Caco-2 (cell line): ENCODE measurements at regions of chr17 and their contacts with region 1.

Region 1: GRCh38 chr17:57440522-57441485 is 184.5 kb downstream of the MSI2 start:
- DNase-seq: no peak
- H3K4me3 ChIP-seq: no peak overlapping the region
- H3K4me3 Mint-ChIP-seq: no peak overlapping the region
- H3K27ac Mint-ChIP-seq: peak overlapping the region; percentile 78
- H3K4me1 ChIP-seq: peaks cover 61% of the 10 kb centered on the region
- H3K4me1 Mint-ChIP-seq: peaks cover 65% of the 10 kb centered on the region
- H3K27me3 ChIP-seq: no peaks in the 10 kb centered on the region
- H3K27me3 Mint-ChIP-seq: no peaks in the 10 kb centered on the region
- CTCF ChIP-seq: no peak

Region 2: GRCh38 chr17:57211543-57211942 is 229.3 kb before region 1 on chr17:
- CTCF ChIA-PET with region 1: no interaction called
- POLR2A ChIA-PET with region 1: no interaction called
- intact Hi-C with region 1: no loop called
- DNase-seq: no peak
- H3K4me3 ChIP-seq: no peak overlapping the region
- H3K4me3 Mint-ChIP-seq: no peak overlapping the region
- H3K27ac Mint-ChIP-seq: no peak overlapping the region
- H3K4me1 ChIP-seq: no peaks in the 10 kb centered on the region
- H3K4me1 Mint-ChIP-seq: no peaks in the 10 kb centered on the region
- H3K27me3 ChIP-seq: no peaks in the 10 kb centered on the region
- H3K27me3 Mint-ChIP-seq: peaks cover 4% of the 10 kb centered on the region
- CTCF ChIP-seq: no peak

Region 3: DNA sequence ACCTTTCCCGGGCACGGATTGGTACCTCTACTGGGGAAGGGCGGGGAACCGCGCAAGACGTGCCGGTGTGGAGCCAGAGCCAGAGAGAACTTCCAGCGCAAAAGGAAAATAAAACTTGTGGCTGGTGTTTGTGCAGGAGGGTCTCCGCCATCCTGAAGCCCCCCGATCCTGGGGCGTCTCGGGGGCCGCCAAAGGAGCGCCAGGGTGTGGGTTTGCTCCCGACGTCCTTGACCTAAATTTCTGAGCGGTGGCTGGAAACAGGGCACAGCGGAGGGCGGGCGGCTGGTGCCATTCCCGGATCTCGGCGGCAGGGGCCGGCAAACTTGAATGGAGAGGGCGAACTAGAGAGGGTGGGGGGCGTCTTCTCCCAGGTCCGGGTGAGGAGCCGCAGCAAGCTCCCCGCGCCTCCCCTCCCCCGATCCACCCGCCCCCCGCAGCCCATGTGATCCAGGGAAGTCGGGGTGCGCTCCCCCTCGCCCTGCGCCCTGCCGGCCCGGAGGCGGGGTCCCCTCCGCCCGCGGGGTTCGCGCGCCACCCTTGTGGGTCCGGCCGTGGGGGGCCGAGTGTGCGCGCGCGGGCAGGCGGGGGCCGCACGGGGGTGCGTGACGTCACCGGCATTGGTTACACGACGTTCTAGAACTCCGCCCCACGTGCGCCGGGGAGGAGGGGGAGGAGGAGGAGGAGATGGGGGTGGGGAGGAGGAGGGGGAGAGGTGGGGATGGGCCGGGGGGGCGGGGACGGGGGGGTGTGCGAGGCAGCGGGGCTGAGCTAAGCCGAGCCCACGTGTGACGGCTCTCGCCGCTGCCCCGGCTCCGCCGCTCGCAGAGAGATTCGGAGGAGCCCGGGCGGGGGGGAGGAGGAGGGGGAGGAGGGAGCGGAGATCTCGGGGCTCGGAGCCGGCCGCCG is 184.8 kb before region 1 on chr17 and contains the start of gene MSI2:
- CTCF ChIA-PET with region 1: no interaction called
- POLR2A ChIA-PET with region 1: no interaction called
- intact Hi-C with region 1: no loop called
- DNase-seq: peak; percentile 90 to 94
- H3K4me3 ChIP-seq: peak within 1 kb of the TSS; percentile 73
- H3K4me3 Mint-ChIP-seq: peak within 1 kb of the TSS; percentile 95
- H3K27ac Mint-ChIP-seq: peak within 1 kb of the TSS; percentile 92
- H3K4me1 ChIP-seq: peaks cover 17% of the 10 kb centered on the region; the same call in 1 of the 2 replicates
- H3K4me1 Mint-ChIP-seq: peaks cover 23% of the 10 kb centered on the region
- H3K27me3 ChIP-seq: no peaks in the 10 kb centered on the region
- H3K27me3 Mint-ChIP-seq: no peaks in the 10 kb centered on the region
- CTCF ChIP-seq: no peak
- total RNA-seq, gene MSI2: 174 and 185 TPM in 2 replicates

Region 4: GRCh38 chr17:57408071-57408811 is 32.6 kb before region 1 on chr17:
- CTCF ChIA-PET with region 1: no interaction called
- POLR2A ChIA-PET with region 1: no interaction called
- intact Hi-C with region 1: loop called (anchors 1 kb)
- DNase-seq: no peak
- H3K4me3 ChIP-seq: no peak overlapping the region
- H3K4me3 Mint-ChIP-seq: no peak overlapping the region
- H3K27ac Mint-ChIP-seq: peak overlapping the region; percentile 93
- H3K4me1 ChIP-seq: peaks cover 30% of the 10 kb centered on the region
- H3K4me1 Mint-ChIP-seq: peaks cover 32% of the 10 kb centered on the region
- H3K27me3 ChIP-seq: no peaks in the 10 kb centered on the region; the same call in 1 of the 2 replicates
- H3K27me3 Mint-ChIP-seq: no peaks in the 10 kb centered on the region
- CTCF ChIP-seq: no peak